ENCODE measurements at regions of chr2 and their contacts with region 1.

Region 1: DNA sequence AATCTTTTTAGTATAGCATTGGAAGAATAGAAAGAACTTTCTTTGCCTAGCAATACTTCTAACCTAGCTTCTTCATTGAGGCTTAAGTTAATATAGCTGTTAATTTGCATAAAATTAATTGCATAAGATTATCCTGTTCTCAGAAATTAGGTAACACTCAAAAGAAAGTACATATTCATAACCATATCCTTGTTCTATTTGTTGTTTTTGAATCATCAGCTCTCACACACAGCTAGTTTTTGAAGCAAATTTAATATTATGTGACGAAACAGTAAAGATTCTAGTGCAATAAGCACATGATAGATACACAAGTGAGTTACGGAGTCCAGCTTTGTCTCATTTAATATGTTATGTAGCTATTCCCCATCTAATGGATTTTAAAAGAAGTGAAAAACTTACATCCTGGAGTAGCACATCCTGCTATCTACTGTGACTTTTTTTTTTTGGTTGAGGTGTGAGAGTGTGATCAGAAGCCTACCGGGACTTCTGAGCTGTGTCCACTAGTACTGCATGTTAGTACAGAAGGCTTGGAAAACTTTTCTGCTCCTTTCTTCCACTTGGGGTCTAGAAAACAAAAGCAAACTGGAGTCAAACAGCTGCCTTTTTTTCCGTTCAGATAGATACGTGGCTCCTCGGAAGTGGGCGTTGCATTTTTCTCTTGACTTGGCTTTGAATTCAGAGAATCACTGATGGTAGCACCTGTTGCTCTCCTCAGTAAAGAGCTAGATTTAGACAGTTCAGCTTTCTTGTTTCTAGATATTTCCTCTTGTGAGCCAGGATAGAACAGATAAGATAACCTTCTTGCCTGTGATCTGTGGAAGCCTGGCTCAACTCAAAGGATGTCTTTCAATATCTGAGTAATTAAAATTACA is 27.2 kb downstream of the KDM3A start:
- DNase-seq: no peak
- ATAC-seq: no peak
- H3K4me3 ChIP-seq: no peak overlapping the region
- H3K27ac ChIP-seq: no peak overlapping the region
- H3K4me1 ChIP-seq: no peaks in the 10 kb centered on the region
- H3K27me3 ChIP-seq: no peaks in the 10 kb centered on the region
- CTCF ChIP-seq: no peak
- EP300 ChIP-seq: no peak
- POLR2A ChIP-seq: no peak
- RAD21 ChIP-seq: no peak

Region 2: DNA sequence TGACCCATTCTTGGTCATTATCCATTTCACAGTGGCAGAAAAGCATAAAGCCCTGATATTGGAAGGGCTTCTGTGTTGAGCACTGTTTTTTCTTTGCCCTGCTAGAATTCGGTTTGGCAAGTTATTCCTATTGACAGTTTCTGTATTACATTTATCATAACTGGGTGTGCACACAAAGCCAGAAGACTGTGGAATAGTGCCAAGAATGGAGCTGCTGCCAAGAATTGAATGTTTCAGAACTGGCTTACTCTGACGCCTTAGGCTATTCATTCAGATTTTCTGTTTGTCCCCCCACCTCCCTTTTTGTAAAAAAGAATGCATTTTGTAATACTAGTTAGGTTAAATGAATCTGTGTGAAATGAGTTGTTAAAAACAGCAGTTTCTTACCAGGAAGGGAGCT is 14.6 kb before region 1 on chr2:
- CTCF ChIA-PET with region 1: no interaction called
- POLR2A ChIA-PET with region 1: interaction called, 12 read pairs
- in situ Hi-C with region 1: no loop called
- intact Hi-C with region 1: no loop called
- DNase-seq: no peak
- ATAC-seq: no peak
- H3K4me3 ChIP-seq: no peak overlapping the region
- H3K27ac ChIP-seq: no peak overlapping the region
- H3K4me1 ChIP-seq: no peaks in the 10 kb centered on the region
- H3K27me3 ChIP-seq: no peaks in the 10 kb centered on the region
- CTCF ChIP-seq: no peak
- EP300 ChIP-seq: no peak
- POLR2A ChIP-seq: no peak
- RAD21 ChIP-seq: no peak

Region 3: GRCh38 chr2:86480105-86480504 is 11.7 kb after region 1 on chr2:
- CTCF ChIA-PET with region 1: no interaction called
- POLR2A ChIA-PET with region 1: interaction called, 16 read pairs
- in situ Hi-C with region 1: no loop called
- intact Hi-C with region 1: no loop called
- DNase-seq: no peak
- ATAC-seq: no peak
- H3K4me3 ChIP-seq: no peak overlapping the region
- H3K27ac ChIP-seq: no peak overlapping the region
- H3K4me1 ChIP-seq: no peaks in the 10 kb centered on the region
- H3K27me3 ChIP-seq: no peaks in the 10 kb centered on the region
- CTCF ChIP-seq: no peak
- EP300 ChIP-seq: no peak
- POLR2A ChIP-seq: no peak
- RAD21 ChIP-seq: no peak

Region 4: GRCh38 chr2:88350331-88351248 is 1882.2 kb after region 1 on chr2:
- CTCF ChIA-PET with region 1: no interaction called
- POLR2A ChIA-PET with region 1: no interaction called
- in situ Hi-C with region 1: no loop called
- intact Hi-C with region 1: no loop called
- DNase-seq: peak; percentile 65 to 76 (median 73)
- ATAC-seq: peak; percentile 92
- H3K4me3 ChIP-seq: no peak overlapping the region
- H3K27ac ChIP-seq: no peak overlapping the region
- H3K4me1 ChIP-seq: peaks cover 0 to 8% of the 10 kb centered on the region in 2 experiments; a peak in 2 of 5 replicates
- H3K27me3 ChIP-seq: peaks cover 7 to 43% of the 10 kb centered on the region in 2 experiments
- CTCF ChIP-seq: peak; percentile 70 to 90 (median 76)
- EP300 ChIP-seq: no peak
- POLR2A ChIP-seq: no peak
- RAD21 ChIP-seq: peak in 1 of 2 experiments; percentile 54; a peak in 2 of 4 replicates